CD8-positive, alpha-beta T cell (primary cell): ENCODE measurements at regions of chr6 and their contacts with region 1.

Region 1: GRCh38 chr6:43516697-43517504 is at the starts of genes POLR1C and YIPF3:
- DNase-seq: peak; percentile 90 to 98 (median 97)
- ATAC-seq: peak; percentile 96
- H3K4me3 ChIP-seq: peak within 1 kb of the TSS; percentile 91 to 98
- H3K4me3 Mint-ChIP-seq: no peak within 1 kb of the TSS
- H3K27ac ChIP-seq: peak within 1 kb of the TSS; percentile 83 to 94
- H3K27ac Mint-ChIP-seq: no peak within 1 kb of the TSS
- H3K4me1 ChIP-seq: peaks cover 34% of the 10 kb centered on the region
- H3K4me1 Mint-ChIP-seq: peaks cover 33% of the 10 kb centered on the region
- H3K27me3 ChIP-seq: no peaks in the 10 kb centered on the region
- H3K27me3 Mint-ChIP-seq: no peaks in the 10 kb centered on the region
- CTCF ChIP-seq: no peak
- total RNA-seq, gene POLR1C: 73.9 to 74.0 TPM
- total RNA-seq, gene YIPF3: 51.0 to 52.5 TPM

Region 2: DNA sequence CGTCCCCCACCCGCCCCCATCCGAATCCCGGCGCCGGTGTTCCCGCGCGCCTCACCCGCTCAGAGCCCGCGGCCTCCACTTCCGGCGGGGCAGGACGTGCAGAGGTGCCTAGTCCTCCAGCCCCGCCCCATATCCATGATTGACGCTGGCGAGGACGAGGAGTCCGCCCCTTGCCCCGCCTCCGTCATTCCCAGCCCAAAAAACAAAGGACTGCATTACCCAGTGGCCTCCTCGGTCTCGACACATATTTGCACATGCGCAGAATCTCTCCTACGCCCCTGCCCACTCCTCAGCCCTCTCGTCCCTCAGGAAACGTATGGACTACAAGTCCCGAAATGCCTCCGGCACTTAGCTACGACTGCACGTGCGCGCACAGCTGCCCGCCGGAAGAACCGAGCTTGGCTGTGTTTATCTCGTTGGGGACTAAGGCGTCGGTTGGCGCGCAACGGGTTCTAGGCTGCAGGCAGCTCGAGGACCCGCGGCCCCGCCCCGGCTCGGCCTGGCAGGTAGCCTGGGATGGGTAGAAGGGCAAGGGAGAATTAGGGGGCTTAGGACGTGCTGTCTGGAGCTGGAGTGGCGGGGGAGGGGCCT is 503.0 kb before region 1 on chr6 and contains the starts of genes KLHDC3 and MEA1:
- CTCF ChIA-PET with region 1: no interaction called
- POLR2A ChIA-PET with region 1: no interaction called
- intact Hi-C with region 1: loop called in 1 of 2 experiments (anchors 2 kb)
- DNase-seq: peak; percentile 95 to 100 (median 98)
- ATAC-seq: peak; percentile 96
- H3K4me3 ChIP-seq: peak within 1 kb of the TSS; percentile 79 to 84
- H3K4me3 Mint-ChIP-seq: peak within 1 kb of the TSS; percentile 95
- H3K27ac ChIP-seq: peak within 1 kb of the TSS; percentile 60 to 74
- H3K27ac Mint-ChIP-seq: peak within 1 kb of the TSS; percentile 94
- H3K4me1 ChIP-seq: peaks cover 29% of the 10 kb centered on the region
- H3K4me1 Mint-ChIP-seq: peaks cover 63% of the 10 kb centered on the region
- H3K27me3 ChIP-seq: no peaks in the 10 kb centered on the region
- H3K27me3 Mint-ChIP-seq: no peaks in the 10 kb centered on the region
- CTCF ChIP-seq: no peak
- total RNA-seq, gene KLHDC3: 20.9 to 21.7 TPM
- total RNA-seq, gene MEA1: 14.5 to 15.3 TPM

Region 3: GRCh38 chr6:43047998-43048397 is 468.9 kb before region 1 on chr6:
- CTCF ChIA-PET with region 1: no interaction called
- POLR2A ChIA-PET with region 1: no interaction called
- intact Hi-C with region 1: no loop called
- DNase-seq: no peak
- ATAC-seq: no peak
- H3K4me3 ChIP-seq: no peak overlapping the region
- H3K4me3 Mint-ChIP-seq: no peak overlapping the region
- H3K27ac ChIP-seq: no peak overlapping the region
- H3K27ac Mint-ChIP-seq: no peak overlapping the region
- H3K4me1 ChIP-seq: peaks cover 7% of the 10 kb centered on the region
- H3K4me1 Mint-ChIP-seq: peaks cover 20% of the 10 kb centered on the region
- H3K27me3 ChIP-seq: no peaks in the 10 kb centered on the region
- H3K27me3 Mint-ChIP-seq: no peaks in the 10 kb centered on the region
- CTCF ChIP-seq: no peak

Region 4: GRCh38 chr6:43247113-43247999 is 269.5 kb before region 1 on chr6:
- CTCF ChIA-PET with region 1: no interaction called
- POLR2A ChIA-PET with region 1: no interaction called
- intact Hi-C with region 1: loop called (anchors 1 kb)
- DNase-seq: peak; percentile 59 to 87 (median 78)
- ATAC-seq: peak; percentile 95
- H3K4me3 ChIP-seq: peak overlapping the region; percentile 65 to 71
- H3K4me3 Mint-ChIP-seq: no peak overlapping the region
- H3K27ac ChIP-seq: peak overlapping the region; percentile 19 to 40
- H3K27ac Mint-ChIP-seq: peak overlapping the region; percentile 88
- H3K4me1 ChIP-seq: peaks cover 11% of the 10 kb centered on the region
- H3K4me1 Mint-ChIP-seq: peaks cover 15% of the 10 kb centered on the region
- H3K27me3 ChIP-seq: peaks cover 11 to 22% of the 10 kb centered on the region in 2 experiments
- H3K27me3 Mint-ChIP-seq: peaks cover 16% of the 10 kb centered on the region
- CTCF ChIP-seq: no peak

Region 5: GRCh38 chr6:43477235-43478007 is 39.5 kb before region 1 on chr6 and contains the start of gene TJAP1:
- CTCF ChIA-PET with region 1: interaction called, 3 read pairs
- POLR2A ChIA-PET with region 1: interaction called, 8 read pairs
- intact Hi-C with region 1: loop called (anchors 1 to 2 kb)
- DNase-seq: peak; percentile 93 to 98 (median 96)
- ATAC-seq: peak; percentile 99
- H3K4me3 ChIP-seq: peak within 1 kb of the TSS; percentile 64 to 83
- H3K4me3 Mint-ChIP-seq: peak within 1 kb of the TSS; percentile 95
- H3K27ac ChIP-seq: peak within 1 kb of the TSS; percentile 93 to 95
- H3K27ac Mint-ChIP-seq: peak within 1 kb of the TSS; percentile 97
- H3K4me1 ChIP-seq: peaks cover 17% of the 10 kb centered on the region
- H3K4me1 Mint-ChIP-seq: peaks cover 48% of the 10 kb centered on the region
- H3K27me3 ChIP-seq: no peaks in the 10 kb centered on the region
- H3K27me3 Mint-ChIP-seq: no peaks in the 10 kb centered on the region
- CTCF ChIP-seq: no peak
- total RNA-seq, gene TJAP1: 29.2 to 29.7 TPM

Region 6: GRCh38 chr6:43584892-43585570 is 68.1 kb after region 1 on chr6:
- CTCF ChIA-PET with region 1: no interaction called
- POLR2A ChIA-PET with region 1: no interaction called
- intact Hi-C with region 1: no loop called
- DNase-seq: peak in 5 of 9 experiments; percentile 9 to 52 (median 31)
- ATAC-seq: peak; percentile 36
- H3K4me3 ChIP-seq: no peak overlapping the region
- H3K4me3 Mint-ChIP-seq: peak overlapping the region; percentile 51
- H3K27ac ChIP-seq: peak overlapping the region; percentile 27 to 62
- H3K27ac Mint-ChIP-seq: peak overlapping the region; percentile 81
- H3K4me1 ChIP-seq: peaks cover 22% of the 10 kb centered on the region
- H3K4me1 Mint-ChIP-seq: peaks cover 27% of the 10 kb centered on the region
- H3K27me3 ChIP-seq: no peaks in the 10 kb centered on the region
- H3K27me3 Mint-ChIP-seq: no peaks in the 10 kb centered on the region
- CTCF ChIP-seq: no peak

Region 7: DNA sequence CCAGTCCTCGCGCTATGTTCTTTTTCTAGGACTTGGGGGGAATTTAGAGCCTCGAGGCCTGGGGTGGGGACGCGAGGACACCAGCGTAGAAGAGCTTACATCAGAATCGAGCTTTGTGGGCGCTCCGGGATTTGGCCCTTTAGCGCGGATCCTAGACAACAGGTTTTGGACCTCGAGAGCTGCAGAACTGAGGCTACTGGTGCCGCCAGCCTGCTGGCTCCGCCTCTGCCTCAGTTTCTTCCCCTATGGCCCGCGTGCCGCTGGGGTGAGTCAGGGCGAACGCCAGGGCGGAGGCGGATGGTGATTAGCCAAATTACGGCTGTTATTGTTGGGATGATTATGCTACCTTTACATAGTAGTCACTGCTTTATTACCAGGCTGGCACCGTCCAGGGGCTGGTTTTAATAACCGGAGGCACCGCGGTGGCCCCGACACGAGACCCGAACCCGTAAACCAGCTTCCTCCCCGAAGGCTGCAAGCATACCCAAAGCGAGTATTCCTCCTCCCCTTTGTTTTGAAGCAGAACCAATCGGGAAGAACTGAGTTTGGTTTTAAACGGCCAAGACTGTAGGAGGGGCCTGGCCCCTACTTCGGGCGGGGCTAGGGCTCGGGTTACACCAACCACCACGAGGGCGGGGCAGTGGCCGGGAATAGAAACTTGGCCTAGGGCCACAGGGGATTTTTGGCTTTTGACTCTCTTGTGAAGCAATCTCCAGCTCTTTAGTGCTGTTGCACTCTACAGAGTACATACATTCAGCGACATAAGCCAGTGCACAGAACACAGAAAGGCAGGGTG is 112.8 kb after region 1 on chr6:
- CTCF ChIA-PET with region 1: no interaction called
- POLR2A ChIA-PET with region 1: interaction called, 4 read pairs
- intact Hi-C with region 1: loop called (anchors 1 to 2 kb)
- DNase-seq: peak; percentile 66 to 96 (median 84)
- ATAC-seq: peak; percentile 51
- H3K4me3 ChIP-seq: peak overlapping the region; percentile 77 to 82
- H3K4me3 Mint-ChIP-seq: peak overlapping the region; percentile 98
- H3K27ac ChIP-seq: peak overlapping the region; percentile 53 to 75
- H3K27ac Mint-ChIP-seq: peak overlapping the region; percentile 95
- H3K4me1 ChIP-seq: peaks cover 15% of the 10 kb centered on the region
- H3K4me1 Mint-ChIP-seq: peaks cover 39% of the 10 kb centered on the region
- H3K27me3 ChIP-seq: no peaks in the 10 kb centered on the region
- H3K27me3 Mint-ChIP-seq: no peaks in the 10 kb centered on the region
- CTCF ChIP-seq: no peak